ENCODE measurements at regions of chr1 and their contacts with region 1.

Region 1: GRCh38 chr1:8343464-8344001 is 25.6 kb downstream of the SLC45A1 start:
- DNase-seq: peak; percentile 96
- ATAC-seq: peak; percentile 85
- H3K4me3 ChIP-seq: peak overlapping the region; percentile 48
- H3K27ac ChIP-seq: peak overlapping the region; percentile 87
- H3K4me1 ChIP-seq: peaks cover 15% of the 10 kb centered on the region
- H3K27me3 ChIP-seq: no peaks in the 10 kb centered on the region
- CTCF ChIP-seq: no peak

Region 2: GRCh38 chr1:8217011-8217711 is 126.4 kb before region 1 on chr1:
- CTCF ChIA-PET with region 1: no interaction called
- POLR2A ChIA-PET with region 1: interaction called, 28 read pairs
- intact Hi-C with region 1: no loop called
- DNase-seq: no peak
- ATAC-seq: no peak
- H3K4me3 ChIP-seq: no peak overlapping the region
- H3K27ac ChIP-seq: no peak overlapping the region
- H3K4me1 ChIP-seq: peaks cover 28% of the 10 kb centered on the region
- H3K27me3 ChIP-seq: no peaks in the 10 kb centered on the region
- CTCF ChIP-seq: no peak

Region 3: GRCh38 chr1:8302081-8302956 is 41.2 kb before region 1 on chr1:
- CTCF ChIA-PET with region 1: no interaction called
- POLR2A ChIA-PET with region 1: no interaction called
- intact Hi-C with region 1: no loop called
- DNase-seq: no peak
- ATAC-seq: no peak
- H3K4me3 ChIP-seq: no peak overlapping the region
- H3K27ac ChIP-seq: no peak overlapping the region
- H3K4me1 ChIP-seq: no peaks in the 10 kb centered on the region
- H3K27me3 ChIP-seq: no peaks in the 10 kb centered on the region
- CTCF ChIP-seq: no peak

Region 4: GRCh38 chr1:8412183-8412831 is 68.8 kb after region 1 on chr1:
- CTCF ChIA-PET with region 1: no interaction called
- POLR2A ChIA-PET with region 1: no interaction called
- intact Hi-C with region 1: no loop called
- DNase-seq: peak; percentile 72
- ATAC-seq: peak; percentile 61
- H3K4me3 ChIP-seq: no peak overlapping the region
- H3K27ac ChIP-seq: peak overlapping the region; percentile 81
- H3K4me1 ChIP-seq: peaks cover 58% of the 10 kb centered on the region
- H3K27me3 ChIP-seq: no peaks in the 10 kb centered on the region
- CTCF ChIP-seq: 0 out of 2 replicates have a peak, but pooled peaks have one; percentile 18